Psoas muscle (tissue), 8 donors: ENCODE measurements at regions of chr7 and their contacts with region 1.

Region 1: DNA sequence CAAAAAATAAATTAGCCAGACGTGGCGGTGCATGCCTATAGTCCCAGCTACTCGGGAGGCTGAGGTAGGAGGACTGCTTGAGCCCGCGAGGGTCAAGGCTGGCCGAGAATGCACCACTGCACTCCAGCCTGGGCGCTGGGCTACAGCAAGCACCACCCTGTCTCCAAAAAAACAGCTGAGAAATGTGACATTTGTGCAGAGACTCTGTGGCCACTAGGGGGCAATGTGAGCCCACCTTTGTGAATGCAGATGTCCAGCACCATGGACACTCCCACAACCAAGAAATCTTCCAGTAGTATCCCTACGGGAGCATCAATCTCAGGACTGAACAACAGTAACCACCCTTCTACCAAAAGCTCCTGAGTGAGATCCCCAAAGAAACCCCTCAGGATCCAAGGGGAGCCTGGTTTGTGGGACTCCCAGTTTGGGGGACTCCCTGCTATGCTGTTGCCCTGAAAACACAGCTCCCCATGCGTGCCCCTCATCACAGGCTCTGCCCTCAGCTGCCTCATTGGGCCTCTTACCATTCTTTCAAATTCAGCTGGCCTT is 6.2 kb upstream of the AHCYL2 start:
- DNase-seq: peak; percentile 85 to 90
- ATAC-seq: peak; percentile 90 to 96 (median 92)
- H3K4me3 ChIP-seq: no peak overlapping the region
- H3K27ac ChIP-seq: no peak overlapping the region
- H3K4me1 ChIP-seq: no peaks in the 10 kb centered on the region
- H3K27me3 ChIP-seq: no peaks in the 10 kb centered on the region
- CTCF ChIP-seq: peak; percentile 94

Region 2: DNA sequence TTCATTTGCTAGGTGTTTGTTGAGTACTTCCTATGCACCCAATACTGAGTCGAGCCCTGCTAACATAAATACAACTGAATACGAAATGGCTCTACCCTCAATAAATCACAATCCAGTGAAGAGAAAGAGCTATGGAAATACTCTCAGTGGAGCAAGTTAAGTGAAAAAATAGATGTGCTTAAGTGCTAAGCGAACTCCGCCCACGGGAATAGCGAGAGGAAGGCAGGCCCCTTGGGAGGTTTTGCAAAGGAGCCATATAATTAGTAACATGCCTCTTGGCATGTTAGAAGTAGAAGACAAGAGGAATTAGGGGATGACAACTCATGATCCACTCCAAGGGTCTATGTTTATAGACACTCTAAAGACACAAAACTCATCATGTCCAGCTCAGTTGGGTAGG is 116.8 kb before region 1 on chr7:
- intact Hi-C with region 1: no loop called
- DNase-seq: no peak
- ATAC-seq: no peak
- H3K4me3 ChIP-seq: no peak overlapping the region
- H3K27ac ChIP-seq: no peak overlapping the region
- H3K4me1 ChIP-seq: peaks cover 8% of the 10 kb centered on the region
- H3K27me3 ChIP-seq: no peaks in the 10 kb centered on the region
- CTCF ChIP-seq: no peak

Region 3: GRCh38 chr7:129298268-129298893 is 79.8 kb after region 1 on chr7:
- intact Hi-C with region 1: loop called (anchors 2 to 5 kb)
- DNase-seq: peak; percentile 25 to 61
- ATAC-seq: peak in 1 of 4 donors; percentile 61
- H3K4me3 ChIP-seq: no peak overlapping the region
- H3K27ac ChIP-seq: no peak overlapping the region
- H3K4me1 ChIP-seq: peaks cover 19% of the 10 kb centered on the region
- H3K27me3 ChIP-seq: no peaks in the 10 kb centered on the region
- CTCF ChIP-seq: peak; percentile 74

Region 4: DNA sequence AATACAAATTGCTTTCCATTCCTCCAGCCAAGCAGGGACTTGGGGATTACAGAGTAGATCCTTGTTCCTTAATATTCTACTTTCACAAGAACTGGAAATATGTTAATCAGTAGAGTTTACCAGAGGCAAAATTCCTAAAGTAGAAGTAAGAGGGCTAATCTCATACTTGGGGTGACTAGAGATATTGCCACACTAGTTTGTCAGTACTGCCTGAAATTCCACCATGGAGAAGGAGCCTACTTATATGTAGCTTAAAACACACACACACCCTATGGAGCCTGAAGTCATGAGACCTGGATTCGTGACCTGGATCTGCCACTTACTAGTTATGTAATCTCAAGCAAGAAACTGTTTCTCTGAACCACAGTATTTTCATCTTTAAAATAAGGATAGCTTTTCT is 249.5 kb after region 1 on chr7:
- intact Hi-C with region 1: loop called (anchors 2 to 10 kb)
- DNase-seq: no peak
- ATAC-seq: peak in 2 of 4 donors; percentile 27 to 33
- H3K4me3 ChIP-seq: no peak overlapping the region
- H3K27ac ChIP-seq: peak overlapping the region; percentile 76
- H3K4me1 ChIP-seq: peaks cover 23% of the 10 kb centered on the region
- H3K27me3 ChIP-seq: no peaks in the 10 kb centered on the region
- CTCF ChIP-seq: no peak

Region 5: GRCh38 chr7:129543816-129544215 is 325.2 kb after region 1 on chr7:
- intact Hi-C with region 1: no loop called
- DNase-seq: no peak
- ATAC-seq: no peak
- H3K4me3 ChIP-seq: no peak overlapping the region
- H3K27ac ChIP-seq: no peak overlapping the region
- H3K4me1 ChIP-seq: no peaks in the 10 kb centered on the region
- H3K27me3 ChIP-seq: peaks cover 0 to 3% (median 0%) of the 10 kb centered on the region in 3 donors
- CTCF ChIP-seq: no peak

Region 6: GRCh38 chr7:129644634-129645230 is 426.1 kb after region 1 on chr7:
- intact Hi-C with region 1: loop called in 1 of 2 experiments (anchors 10 kb)
- DNase-seq: no peak
- ATAC-seq: peak in 3 of 4 donors; percentile 26 to 55 (median 46)
- H3K4me3 ChIP-seq: no peak overlapping the region
- H3K27ac ChIP-seq: no peak overlapping the region
- H3K4me1 ChIP-seq: peaks cover 15% of the 10 kb centered on the region
- H3K27me3 ChIP-seq: no peaks in the 10 kb centered on the region
- CTCF ChIP-seq: peak; percentile 46